ENCODE measurements at regions of chr10 and their contacts with region 1.

Region 1: GRCh38 chr10:9209105-9209798 is 1154.8 kb downstream of the GATA3 start:
- DNase-seq: peak; percentile 46
- H3K4me3 ChIP-seq: no peak overlapping the region
- H3K27ac ChIP-seq: no peak overlapping the region
- H3K4me1 ChIP-seq: no peaks in the 10 kb centered on the region
- H3K27me3 ChIP-seq: no peaks in the 10 kb centered on the region
- CTCF ChIP-seq: peak; percentile 90

Region 2: GRCh38 chr10:7866176-7866575 is 1343.1 kb before region 1 on chr10:
- CTCF ChIA-PET with region 1: no interaction called
- dilution Hi-C with region 1: no loop called
- in situ Hi-C with region 1: loop called (anchors 10 to 25 kb)
- intact Hi-C with region 1: no loop called
- DNase-seq: no peak
- H3K4me3 ChIP-seq: no peak overlapping the region
- H3K27ac ChIP-seq: no peak overlapping the region
- H3K4me1 ChIP-seq: no peaks in the 10 kb centered on the region
- H3K27me3 ChIP-seq: no peaks in the 10 kb centered on the region
- CTCF ChIP-seq: no peak

Region 3: GRCh38 chr10:8035006-8035640 is 1174.1 kb before region 1 on chr10:
- CTCF ChIA-PET with region 1: no interaction called
- dilution Hi-C with region 1: loop called (anchors 10 kb)
- in situ Hi-C with region 1: no loop called
- intact Hi-C with region 1: no loop called
- DNase-seq: no peak
- H3K4me3 ChIP-seq: no peak overlapping the region
- H3K27ac ChIP-seq: no peak overlapping the region
- H3K4me1 ChIP-seq: peaks cover 2% of the 10 kb centered on the region
- H3K27me3 ChIP-seq: peaks cover 42% of the 10 kb centered on the region
- CTCF ChIP-seq: no peak

Region 4: DNA sequence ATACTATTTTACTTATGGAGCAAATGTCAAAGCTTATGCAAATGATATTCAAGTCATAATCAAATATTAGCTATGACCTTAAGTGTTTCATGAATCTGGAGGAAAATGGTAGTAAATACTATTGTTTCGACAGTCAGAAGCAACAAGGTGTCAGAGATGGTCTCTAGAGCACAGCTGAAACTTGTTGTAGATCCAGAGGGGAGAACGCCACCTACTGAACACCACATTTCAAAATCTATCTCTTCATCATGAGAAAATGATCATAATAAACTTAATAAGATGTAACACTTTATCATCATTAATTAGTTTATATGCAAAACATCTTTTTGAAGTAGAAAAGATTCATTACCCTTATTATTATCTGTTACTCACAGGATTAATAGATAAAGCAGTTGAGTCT is 736.0 kb before region 1 on chr10:
- CTCF ChIA-PET with region 1: no interaction called
- dilution Hi-C with region 1: no loop called
- in situ Hi-C with region 1: no loop called
- intact Hi-C with region 1: loop called (anchors 5 kb)
- DNase-seq: no peak
- H3K4me3 ChIP-seq: no peak overlapping the region
- H3K27ac ChIP-seq: no peak overlapping the region
- H3K4me1 ChIP-seq: no peaks in the 10 kb centered on the region
- H3K27me3 ChIP-seq: no peaks in the 10 kb centered on the region
- CTCF ChIP-seq: peak in 1 of 2 donors; percentile 19

Region 5: GRCh38 chr10:8898745-8899325 is 310.4 kb before region 1 on chr10:
- CTCF ChIA-PET with region 1: no interaction called
- dilution Hi-C with region 1: no loop called
- in situ Hi-C with region 1: loop called in 1 of 2 experiments (anchors 25 kb)
- intact Hi-C with region 1: no loop called
- DNase-seq: no peak
- H3K4me3 ChIP-seq: no peak overlapping the region
- H3K27ac ChIP-seq: no peak overlapping the region
- H3K4me1 ChIP-seq: no peaks in the 10 kb centered on the region
- H3K27me3 ChIP-seq: no peaks in the 10 kb centered on the region
- CTCF ChIP-seq: no peak

Region 6: DNA sequence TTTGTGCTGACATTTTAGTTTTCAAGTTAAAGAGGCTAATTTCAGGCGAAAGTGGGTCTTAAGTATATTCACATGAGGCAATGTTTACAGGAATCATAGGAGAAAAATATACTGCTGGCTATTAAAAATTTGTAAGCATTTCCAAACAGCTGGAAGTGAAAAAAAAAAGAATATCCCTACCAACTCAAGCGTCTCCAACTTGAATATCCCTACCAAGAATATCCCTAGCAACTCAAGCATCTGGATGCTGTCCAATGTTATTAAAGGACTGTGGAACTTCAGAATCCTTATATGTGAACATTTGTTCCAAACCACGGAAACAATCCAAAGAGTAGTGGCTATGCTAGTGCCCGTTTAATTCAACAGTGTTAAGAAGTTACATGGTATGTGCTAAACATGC is 148.2 kb after region 1 on chr10:
- CTCF ChIA-PET with region 1: no interaction called
- dilution Hi-C with region 1: no loop called
- in situ Hi-C with region 1: no loop called
- intact Hi-C with region 1: no loop called
- DNase-seq: no peak
- H3K4me3 ChIP-seq: no peak overlapping the region
- H3K27ac ChIP-seq: no peak overlapping the region
- H3K4me1 ChIP-seq: no peaks in the 10 kb centered on the region
- H3K27me3 ChIP-seq: no peaks in the 10 kb centered on the region
- CTCF ChIP-seq: no peak

Region 7: DNA sequence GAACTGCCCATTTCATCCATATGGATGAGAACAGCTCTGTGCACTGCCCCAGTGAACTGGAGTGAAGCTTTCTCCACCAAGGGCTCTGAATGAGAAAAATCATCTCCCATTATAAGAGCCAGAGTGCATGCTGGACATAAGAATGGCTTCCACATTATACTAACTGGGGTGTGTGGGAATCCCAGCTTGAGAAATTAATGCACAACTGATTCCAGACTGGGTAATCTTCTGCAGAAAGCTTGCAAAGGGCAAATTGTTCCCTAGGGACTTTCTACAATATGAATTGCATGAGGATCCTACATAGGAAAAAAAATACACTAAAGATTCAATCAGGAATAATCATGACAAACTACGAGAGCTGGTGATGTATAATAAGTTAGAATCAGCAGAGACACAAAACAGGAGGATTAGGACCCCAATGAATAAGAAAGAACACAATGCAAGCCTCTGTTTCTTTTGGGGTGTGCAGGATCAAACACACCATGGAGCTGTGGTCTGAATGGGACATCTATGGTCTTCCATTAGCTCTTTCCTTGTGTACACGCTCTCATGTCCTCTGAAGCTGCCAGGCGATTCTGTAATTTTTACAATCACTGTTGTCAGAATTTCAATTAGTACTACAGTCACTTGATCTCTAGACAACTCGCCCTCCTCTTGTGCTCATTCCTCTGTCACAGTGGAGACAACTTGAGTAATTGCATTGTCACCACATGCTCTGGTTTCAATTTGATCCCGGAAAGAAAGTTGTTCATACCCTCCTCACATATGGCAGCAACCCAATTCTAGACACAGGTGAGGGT is 172.7 kb after region 1 on chr10:
- CTCF ChIA-PET with region 1: no interaction called
- dilution Hi-C with region 1: no loop called
- in situ Hi-C with region 1: no loop called
- intact Hi-C with region 1: no loop called
- DNase-seq: no peak
- H3K4me3 ChIP-seq: no peak overlapping the region
- H3K27ac ChIP-seq: no peak overlapping the region
- H3K4me1 ChIP-seq: no peaks in the 10 kb centered on the region
- H3K27me3 ChIP-seq: no peaks in the 10 kb centered on the region
- CTCF ChIP-seq: no peak

Region 8: GRCh38 chr10:9437131-9437530 is 227.9 kb after region 1 on chr10:
- CTCF ChIA-PET with region 1: no interaction called
- dilution Hi-C with region 1: no loop called
- in situ Hi-C with region 1: no loop called
- intact Hi-C with region 1: no loop called
- DNase-seq: no peak
- H3K4me3 ChIP-seq: no peak overlapping the region
- H3K27ac ChIP-seq: no peak overlapping the region
- H3K4me1 ChIP-seq: no peaks in the 10 kb centered on the region
- H3K27me3 ChIP-seq: no peaks in the 10 kb centered on the region
- CTCF ChIP-seq: no peak